ENCODE measurements at regions of chr5 and their contacts with region 1.

Region 1: DNA sequence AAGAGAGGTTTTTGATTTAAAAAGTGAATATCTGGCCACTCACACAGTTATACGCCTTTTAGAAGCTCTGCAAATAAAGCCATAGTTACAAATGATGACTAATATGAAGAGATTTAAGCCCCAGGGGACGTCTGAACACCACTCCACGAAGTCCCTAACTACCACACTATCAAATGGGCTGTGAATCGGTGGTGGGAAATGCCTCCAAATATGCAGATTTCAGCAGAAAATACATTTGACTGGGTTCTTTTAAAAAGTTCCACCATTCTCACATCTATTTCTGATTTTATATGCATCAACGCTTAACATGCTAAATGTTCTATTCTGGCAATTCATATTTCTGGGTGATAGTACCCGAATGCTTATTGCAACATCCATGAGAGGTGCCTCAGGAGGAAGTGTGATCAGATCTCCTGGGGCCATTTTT is 22.5 kb downstream of the TICAM2 start:
- DNase-seq: no peak
- H3K4me3 ChIP-seq: no peak overlapping the region
- H3K27ac ChIP-seq: no peak overlapping the region
- H3K4me1 ChIP-seq: no peaks in the 10 kb centered on the region
- H3K27me3 ChIP-seq: no peaks in the 10 kb centered on the region
- CTCF ChIP-seq: no peak
- EP300 ChIP-seq: no peak
- POLR2A ChIP-seq: no peak

Region 2: GRCh38 chr5:115377468-115378217 is 202.1 kb before region 1 on chr5:
- in situ Hi-C with region 1: loop called in 1 of 4 experiments (anchors 10 kb)
- intact Hi-C with region 1: no loop called
- DNase-seq: no peak
- H3K4me3 ChIP-seq: no peak overlapping the region
- H3K27ac ChIP-seq: peak overlapping the region in 3 of 4 donors; percentile 46 to 54 (median 51)
- H3K4me1 ChIP-seq: peaks cover 0 to 23% (median 11%) of the 10 kb centered on the region in 4 donors
- H3K27me3 ChIP-seq: no peaks in the 10 kb centered on the region
- CTCF ChIP-seq: peak in 4 of 5 experiments; percentile 8 to 52 (median 28)
- EP300 ChIP-seq: no peak
- POLR2A ChIP-seq: no peak

Measured in transverse colon (tissue), 4 donors.